CD14-positive monocyte (primary cell): ENCODE measurements at regions of chr5 and their contacts with region 1.

Region 1: DNA sequence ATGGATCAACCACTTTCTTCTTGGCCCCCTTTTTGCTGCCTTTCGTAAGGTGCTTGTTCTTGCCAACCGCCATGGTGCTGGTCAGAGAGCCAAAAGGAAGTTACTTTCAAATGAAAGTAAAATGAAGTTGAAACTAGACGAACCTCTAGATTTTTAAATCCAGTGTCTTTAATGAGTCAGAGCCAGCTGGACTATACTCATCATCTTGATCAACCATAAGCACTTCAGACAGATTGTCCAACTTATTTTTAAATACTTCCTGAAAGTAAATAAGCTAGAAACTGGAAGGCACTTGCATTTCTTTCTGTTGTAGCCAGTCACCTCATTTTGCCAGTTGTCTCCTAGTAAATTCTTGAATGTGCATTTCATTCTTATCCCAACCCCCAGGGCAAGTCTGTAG is 48.9 kb downstream of the JMY start:
- DNase-seq: peak in 2 of 3 donors; percentile 7 to 19
- H3K4me3 ChIP-seq: no peak overlapping the region
- H3K4me3 Mint-ChIP-seq: no peak overlapping the region
- H3K27ac ChIP-seq: no peak overlapping the region
- H3K27ac Mint-ChIP-seq: no peak overlapping the region
- H3K4me1 ChIP-seq: no peaks in the 10 kb centered on the region
- H3K4me1 Mint-ChIP-seq: peaks cover 6% of the 10 kb centered on the region
- H3K27me3 ChIP-seq: no peaks in the 10 kb centered on the region
- H3K27me3 Mint-ChIP-seq: no peaks in the 10 kb centered on the region
- CTCF ChIP-seq: no peak

Region 2: GRCh38 chr5:79050498-79050897 is 234.3 kb before region 1 on chr5:
- intact Hi-C with region 1: no loop called
- DNase-seq: no peak
- H3K4me3 ChIP-seq: no peak overlapping the region
- H3K4me3 Mint-ChIP-seq: no peak overlapping the region
- H3K27ac ChIP-seq: no peak overlapping the region
- H3K27ac Mint-ChIP-seq: no peak overlapping the region
- H3K4me1 ChIP-seq: no peaks in the 10 kb centered on the region
- H3K4me1 Mint-ChIP-seq: no peaks in the 10 kb centered on the region
- H3K27me3 ChIP-seq: no peaks in the 10 kb centered on the region
- H3K27me3 Mint-ChIP-seq: peaks cover 0 to 1% (median 0%) of the 10 kb centered on the region in 3 donors
- CTCF ChIP-seq: no peak

Region 3: GRCh38 chr5:79173626-79174025 is 111.2 kb before region 1 on chr5:
- intact Hi-C with region 1: no loop called
- DNase-seq: no peak
- H3K4me3 ChIP-seq: no peak overlapping the region
- H3K4me3 Mint-ChIP-seq: no peak overlapping the region
- H3K27ac ChIP-seq: no peak overlapping the region
- H3K27ac Mint-ChIP-seq: no peak overlapping the region
- H3K4me1 ChIP-seq: no peaks in the 10 kb centered on the region
- H3K4me1 Mint-ChIP-seq: no peaks in the 10 kb centered on the region
- H3K27me3 ChIP-seq: no peaks in the 10 kb centered on the region
- H3K27me3 Mint-ChIP-seq: peaks cover 0 to 2% (median 0%) of the 10 kb centered on the region in 3 donors
- CTCF ChIP-seq: no peak

Region 4: GRCh38 chr5:79241535-79241979 is 43.3 kb before region 1 on chr5:
- intact Hi-C with region 1: loop called in 1 of 2 experiments (anchors 5 kb)
- DNase-seq: no peak
- H3K4me3 ChIP-seq: no peak overlapping the region
- H3K4me3 Mint-ChIP-seq: no peak overlapping the region
- H3K27ac ChIP-seq: no peak overlapping the region
- H3K27ac Mint-ChIP-seq: no peak overlapping the region
- H3K4me1 ChIP-seq: peaks cover 21 to 22% of the 10 kb centered on the region in 2 donors
- H3K4me1 Mint-ChIP-seq: peaks cover 37% of the 10 kb centered on the region
- H3K27me3 ChIP-seq: peaks cover 14 to 18% of the 10 kb centered on the region in 2 donors
- H3K27me3 Mint-ChIP-seq: peaks cover 16 to 21% (median 20%) of the 10 kb centered on the region in 3 donors
- CTCF ChIP-seq: no peak